Cardiac septum (tissue), 1 donor: ENCODE measurements at regions of chr10 and their contacts with region 1.

Region 1: GRCh38 chr10:3785257-3785850 is 345 bp upstream of the KLF6 start:
- DNase-seq: peak; percentile 99

Region 2: GRCh38 chr10:3197348-3198003 is 587.9 kb before region 1 on chr10:
- intact Hi-C with region 1: loop called (anchors 2 kb)
- DNase-seq: peak; percentile 88

Region 3: GRCh38 chr10:3805791-3806461 is 20.6 kb after region 1 on chr10:
- intact Hi-C with region 1: loop called (anchors 1 kb)
- DNase-seq: no peak

Region 4: GRCh38 chr10:3972460-3973301 is 187.3 kb after region 1 on chr10:
- intact Hi-C with region 1: no loop called
- DNase-seq: no peak

Region 5: GRCh38 chr10:4081685-4082111 is 296.3 kb after region 1 on chr10:
- intact Hi-C with region 1: loop called (anchors 2 kb)
- DNase-seq: no peak

Region 6: GRCh38 chr10:4344511-4344994 is 559.2 kb after region 1 on chr10:
- intact Hi-C with region 1: loop called (anchors 10 kb)
- DNase-seq: peak; percentile 80

Region 7: GRCh38 chr10:4767033-4767814 is 981.9 kb after region 1 on chr10:
- intact Hi-C with region 1: loop called (anchors 2 kb)
- DNase-seq: no peak